Tibial artery (tissue), 4 donors: ENCODE measurements at regions of chr17 and their contacts with region 1.

Region 1: GRCh38 chr17:39153599-39154051 is 2.2 kb upstream of the PLXDC1 start:
- DNase-seq: peak; percentile 95 to 96
- H3K4me3 ChIP-seq: peak overlapping the region; percentile 62 to 73
- H3K27ac ChIP-seq: peak overlapping the region; percentile 89 to 94
- H3K4me1 ChIP-seq: peaks cover 0 to 26% (median 20%) of the 10 kb centered on the region in 4 donors
- H3K27me3 ChIP-seq: peaks cover 0 to 21% of the 10 kb centered on the region in 2 donors
- CTCF ChIP-seq: peak; percentile 25 to 41

Region 2: GRCh38 chr17:38982858-38983746 is 170.5 kb before region 1 on chr17:
- intact Hi-C with region 1: loop called (anchors 5 kb)
- DNase-seq: peak in 1 of 2 donors; percentile 53
- H3K4me3 ChIP-seq: no peak overlapping the region
- H3K27ac ChIP-seq: peak overlapping the region in 1 of 2 donors; percentile 67
- H3K4me1 ChIP-seq: peaks cover 0 to 30% (median 6%) of the 10 kb centered on the region in 4 donors
- H3K27me3 ChIP-seq: no peaks in the 10 kb centered on the region
- CTCF ChIP-seq: peak; percentile 71 to 80

Region 3: GRCh38 chr17:39281806-39282205 is 128.2 kb after region 1 on chr17:
- intact Hi-C with region 1: no loop called
- DNase-seq: no peak
- H3K4me3 ChIP-seq: no peak overlapping the region
- H3K27ac ChIP-seq: no peak overlapping the region
- H3K4me1 ChIP-seq: peaks cover 0 to 6% (median 0%) of the 10 kb centered on the region in 4 donors
- H3K27me3 ChIP-seq: no peaks in the 10 kb centered on the region
- CTCF ChIP-seq: no peak